Ovary (tissue), 10 donors: ENCODE measurements at regions of chr20 and their contacts with region 1.

Region 1: DNA sequence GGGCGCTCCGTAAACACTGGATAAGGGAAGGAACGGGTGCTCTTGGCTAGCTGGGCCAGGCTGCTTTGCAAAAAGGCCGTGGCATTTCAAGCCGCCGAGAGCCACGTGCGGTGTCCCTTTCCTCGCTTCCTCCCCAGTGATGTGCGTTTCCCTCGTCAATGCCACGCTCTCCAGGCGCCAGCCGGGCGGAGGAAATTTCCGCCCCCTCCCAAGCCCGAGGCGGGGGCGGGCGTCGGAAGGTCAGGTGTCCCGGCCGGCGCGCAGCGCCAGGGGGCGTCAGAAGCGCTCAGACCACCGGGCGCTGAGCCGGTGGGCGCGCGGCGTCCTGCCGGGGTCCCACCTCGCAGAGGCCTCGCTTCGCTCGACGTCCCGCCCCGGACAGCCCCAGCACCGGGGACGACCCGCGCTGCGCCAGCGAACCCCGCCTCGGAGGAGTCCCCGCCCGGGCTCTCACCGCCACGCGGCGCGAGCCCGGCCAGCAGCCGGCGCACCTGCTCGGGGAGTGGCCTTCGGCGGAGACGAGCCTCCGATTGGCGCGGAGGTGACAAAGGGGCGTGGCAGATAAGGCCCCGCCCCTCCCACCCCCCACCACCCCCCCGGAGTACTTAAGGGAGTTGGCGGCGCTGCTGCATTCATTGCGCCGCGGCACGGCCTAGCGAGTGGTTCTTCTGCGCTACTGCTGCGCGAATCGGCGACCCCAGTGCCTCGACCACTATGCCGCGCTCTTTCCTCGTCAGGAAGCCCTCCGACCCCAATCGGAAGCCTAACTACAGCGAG is at the start of gene SNAI1:
- DNase-seq: peak; percentile 80 to 85 (median 83)
- H3K4me3 ChIP-seq: peak within 1 kb of the TSS; percentile 32
- H3K27ac ChIP-seq: no peak within 1 kb of the TSS
- H3K4me1 ChIP-seq: peaks cover 14% of the 10 kb centered on the region
- H3K27me3 ChIP-seq: no peaks in the 10 kb centered on the region
- CTCF ChIP-seq: peak in 2 of 3 donors; percentile 65 to 70
- EP300 ChIP-seq: no peak
- POLR2A ChIP-seq: peak; percentile 76
- total RNA-seq, gene SNAI1: 1.1 to 9.0 (median 1.7) TPM

Region 2: DNA sequence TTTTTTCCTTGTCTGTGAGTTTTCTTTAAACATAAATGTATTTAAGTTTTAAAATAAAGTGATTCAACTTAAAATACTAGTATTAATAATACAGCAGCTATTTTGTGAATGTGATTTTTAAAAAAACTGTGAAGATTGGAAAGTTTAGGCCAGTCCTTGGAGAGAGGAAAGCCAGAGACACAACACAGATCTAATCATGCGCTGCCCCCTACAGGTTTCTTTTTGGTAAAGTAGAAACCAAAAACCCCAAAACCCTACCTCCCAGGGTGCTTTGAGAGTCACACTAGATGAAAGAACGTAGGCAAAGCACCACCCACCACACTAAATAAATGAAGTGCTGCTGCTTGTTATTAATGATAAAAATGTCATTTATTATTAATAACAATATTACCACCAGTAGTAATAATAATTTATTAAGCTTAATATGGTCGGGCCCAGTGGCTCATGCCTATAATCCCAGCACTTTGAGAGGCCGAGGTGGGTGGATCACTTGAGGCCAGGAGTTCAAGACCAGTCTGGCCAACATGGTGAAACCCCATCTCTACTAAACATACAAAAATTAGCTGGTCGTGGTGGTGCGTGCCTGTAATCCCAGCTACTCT is 136.2 kb before region 1 on chr20:
- intact Hi-C with region 1: no loop called
- DNase-seq: peak in 3 of 5 donors; percentile 43 to 62 (median 43)
- H3K4me3 ChIP-seq: no peak overlapping the region
- H3K27ac ChIP-seq: no peak overlapping the region
- H3K4me1 ChIP-seq: no peaks in the 10 kb centered on the region
- H3K27me3 ChIP-seq: no peaks in the 10 kb centered on the region
- CTCF ChIP-seq: peak; percentile 14 to 60 (median 58)
- EP300 ChIP-seq: no peak
- POLR2A ChIP-seq: no peak

Region 3: GRCh38 chr20:50070991-50071888 is 88.7 kb after region 1 on chr20:
- intact Hi-C with region 1: loop called (anchors 1 to 2 kb)
- DNase-seq: peak; percentile 85 to 96 (median 92)
- H3K4me3 ChIP-seq: no peak overlapping the region
- H3K27ac ChIP-seq: no peak overlapping the region
- H3K4me1 ChIP-seq: peaks cover 2% of the 10 kb centered on the region
- H3K27me3 ChIP-seq: no peaks in the 10 kb centered on the region
- CTCF ChIP-seq: peak; percentile 98 to 100 (median 98)
- EP300 ChIP-seq: no peak
- POLR2A ChIP-seq: no peak

Region 4: DNA sequence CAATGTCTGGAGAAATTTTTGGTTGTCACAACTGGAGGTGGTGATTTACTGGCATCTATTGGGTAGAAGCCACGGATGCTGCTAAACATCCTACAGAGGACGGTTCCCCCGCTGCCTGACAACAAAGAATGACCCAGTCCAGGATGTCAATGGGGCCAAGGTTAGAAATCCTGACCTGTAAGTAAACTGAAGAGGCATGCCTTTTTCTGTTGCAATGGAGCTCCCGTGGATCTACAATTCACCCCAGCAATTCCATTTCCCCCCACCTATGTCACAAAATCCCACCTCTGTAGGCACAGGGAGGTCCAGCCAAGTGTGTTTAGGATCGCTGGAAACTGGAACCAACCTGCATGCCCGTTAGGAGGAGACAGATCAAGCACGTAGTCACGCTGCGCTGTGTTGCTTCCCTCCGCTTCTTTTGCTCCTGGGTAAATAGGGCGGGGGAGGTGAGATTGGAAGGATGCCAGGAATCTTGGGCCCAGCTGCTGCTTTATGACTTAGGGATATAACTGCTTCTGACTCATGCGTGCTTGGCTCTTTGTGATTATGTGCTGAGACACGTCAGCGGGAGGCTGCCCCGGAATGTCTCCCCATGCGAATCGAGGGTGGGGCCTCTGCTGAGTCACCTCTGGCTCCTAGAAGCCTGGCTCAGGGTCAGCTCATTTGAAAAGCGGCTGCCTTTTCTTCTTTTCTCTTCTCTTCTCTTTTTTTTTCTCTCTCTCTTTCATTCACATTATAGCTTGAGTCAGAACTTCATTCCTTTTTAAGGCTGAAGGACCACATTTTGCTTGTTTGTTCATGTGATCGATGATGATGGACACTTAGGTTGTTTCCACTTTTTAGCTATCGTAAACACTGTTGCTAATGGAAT is 183.4 kb after region 1 on chr20:
- intact Hi-C with region 1: loop called in 2 of 4 experiments (anchors 5 to 10 kb)
- DNase-seq: peak; percentile 95 to 99 (median 96)
- H3K4me3 ChIP-seq: peak overlapping the region; percentile 11
- H3K27ac ChIP-seq: peak overlapping the region; percentile 18 to 81
- H3K4me1 ChIP-seq: peaks cover 2% of the 10 kb centered on the region
- H3K27me3 ChIP-seq: no peaks in the 10 kb centered on the region
- CTCF ChIP-seq: no peak
- EP300 ChIP-seq: peak; percentile 84
- POLR2A ChIP-seq: no peak

Region 5: GRCh38 chr20:50179507-50180016 is 197.0 kb after region 1 on chr20:
- intact Hi-C with region 1: loop called in 3 of 4 experiments (anchors 5 to 10 kb)
- DNase-seq: no peak
- H3K4me3 ChIP-seq: no peak overlapping the region
- H3K27ac ChIP-seq: no peak overlapping the region
- H3K4me1 ChIP-seq: no peaks in the 10 kb centered on the region
- H3K27me3 ChIP-seq: no peaks in the 10 kb centered on the region
- CTCF ChIP-seq: no peak
- EP300 ChIP-seq: no peak
- POLR2A ChIP-seq: no peak

Region 6: GRCh38 chr20:50588034-50588611 is 605.6 kb after region 1 on chr20:
- intact Hi-C with region 1: loop called in 1 of 4 experiments (anchors 10 kb)
- DNase-seq: peak; percentile 67 to 85 (median 78)
- H3K4me3 ChIP-seq: no peak overlapping the region
- H3K27ac ChIP-seq: no peak overlapping the region
- H3K4me1 ChIP-seq: peaks cover 6% of the 10 kb centered on the region
- H3K27me3 ChIP-seq: no peaks in the 10 kb centered on the region
- CTCF ChIP-seq: peak; percentile 60 to 74 (median 72)
- EP300 ChIP-seq: no peak
- POLR2A ChIP-seq: no peak